Naive thymus-derived CD4-positive, alpha-beta T cell (primary cell): ENCODE measurements at regions of chr1 and their contacts with region 1.

Region 1: GRCh38 chr1:206575165-206575893 is 36.9 kb downstream of the EIF2D start:
- DNase-seq: peak in 7 of 9 donors; percentile 73 to 86 (median 82)
- ATAC-seq: peak; percentile 75
- H3K4me3 ChIP-seq: peak overlapping the region; percentile 33
- H3K4me3 Mint-ChIP-seq: peak overlapping the region; percentile 68 to 88 (median 79)
- H3K27ac ChIP-seq: peak overlapping the region; percentile 90
- H3K27ac Mint-ChIP-seq: peak overlapping the region; percentile 81 to 100 (median 91)
- H3K4me1 ChIP-seq: peaks cover 98% of the 10 kb centered on the region in 2 donors
- H3K4me1 Mint-ChIP-seq: peaks cover 79 to 100% (median 96%) of the 10 kb centered on the region in 7 donors
- H3K27me3 ChIP-seq: no peaks in the 10 kb centered on the region
- H3K27me3 Mint-ChIP-seq: no peaks in the 10 kb centered on the region

Region 2: GRCh38 chr1:206556750-206557635 is 18.3 kb before region 1 on chr1:
- CTCF ChIA-PET with region 1: interaction called, 424 read pairs
- POLR2A ChIA-PET with region 1: interaction called, 722 read pairs
- intact Hi-C with region 1: loop called (anchors 1 kb)
- DNase-seq: peak; percentile 78 to 93 (median 88)
- ATAC-seq: peak; percentile 86
- H3K4me3 ChIP-seq: peak overlapping the region; percentile 90
- H3K4me3 Mint-ChIP-seq: peak overlapping the region; percentile 77 to 99 (median 96)
- H3K27ac ChIP-seq: peak overlapping the region; percentile 90
- H3K27ac Mint-ChIP-seq: peak overlapping the region; percentile 86 to 100 (median 94)
- H3K4me1 ChIP-seq: peaks cover 61 to 66% of the 10 kb centered on the region in 2 donors
- H3K4me1 Mint-ChIP-seq: peaks cover 59 to 75% (median 70%) of the 10 kb centered on the region in 7 donors
- H3K27me3 ChIP-seq: no peaks in the 10 kb centered on the region
- H3K27me3 Mint-ChIP-seq: no peaks in the 10 kb centered on the region

Region 3: GRCh38 chr1:206563367-206564207 is 11.7 kb before region 1 on chr1:
- CTCF ChIA-PET with region 1: interaction called, 424 read pairs
- POLR2A ChIA-PET with region 1: interaction called, 722 read pairs
- intact Hi-C with region 1: loop called (anchors 1 kb)
- DNase-seq: no peak
- ATAC-seq: peak; percentile 6
- H3K4me3 ChIP-seq: peak overlapping the region; percentile 44
- H3K4me3 Mint-ChIP-seq: peak overlapping the region; percentile 77 to 99 (median 87)
- H3K27ac ChIP-seq: peak overlapping the region; percentile 90
- H3K27ac Mint-ChIP-seq: peak overlapping the region; percentile 86 to 100 (median 92)
- H3K4me1 ChIP-seq: peaks cover 88 to 90% of the 10 kb centered on the region in 2 donors
- H3K4me1 Mint-ChIP-seq: peaks cover 75 to 96% (median 91%) of the 10 kb centered on the region in 7 donors
- H3K27me3 ChIP-seq: no peaks in the 10 kb centered on the region
- H3K27me3 Mint-ChIP-seq: no peaks in the 10 kb centered on the region

Region 4: GRCh38 chr1:206590025-206590758 is 14.9 kb after region 1 on chr1:
- CTCF ChIA-PET with region 1: interaction called, 9 read pairs
- POLR2A ChIA-PET with region 1: interaction called, 8 read pairs
- intact Hi-C with region 1: loop called in 1 of 2 experiments (anchors 1 kb)
- DNase-seq: peak in 3 of 9 donors; percentile 31 to 60 (median 36)
- ATAC-seq: peak; percentile 84
- H3K4me3 ChIP-seq: no peak overlapping the region
- H3K4me3 Mint-ChIP-seq: peak overlapping the region in 2 of 10 donors; percentile 70 to 75
- H3K27ac ChIP-seq: peak overlapping the region; percentile 28
- H3K27ac Mint-ChIP-seq: peak overlapping the region; percentile 27 to 91 (median 80)
- H3K4me1 ChIP-seq: peaks cover 7 to 19% of the 10 kb centered on the region in 2 donors
- H3K4me1 Mint-ChIP-seq: peaks cover 21 to 70% (median 45%) of the 10 kb centered on the region in 7 donors
- H3K27me3 ChIP-seq: no peaks in the 10 kb centered on the region
- H3K27me3 Mint-ChIP-seq: no peaks in the 10 kb centered on the region

Region 5: GRCh38 chr1:206967096-206967849 is 391.9 kb after region 1 on chr1:
- CTCF ChIA-PET with region 1: no interaction called
- POLR2A ChIA-PET with region 1: no interaction called
- intact Hi-C with region 1: no loop called
- DNase-seq: peak in 2 of 9 donors; percentile 6 to 16
- ATAC-seq: peak; percentile 67
- H3K4me3 ChIP-seq: no peak overlapping the region
- H3K4me3 Mint-ChIP-seq: peak overlapping the region; percentile 54 to 82 (median 72)
- H3K27ac ChIP-seq: no peak overlapping the region
- H3K27ac Mint-ChIP-seq: peak overlapping the region; percentile 46 to 90 (median 71)
- H3K4me1 ChIP-seq: peaks cover 1 to 25% of the 10 kb centered on the region in 2 donors
- H3K4me1 Mint-ChIP-seq: peaks cover 29 to 57% (median 38%) of the 10 kb centered on the region in 7 donors
- H3K27me3 ChIP-seq: no peaks in the 10 kb centered on the region
- H3K27me3 Mint-ChIP-seq: peaks cover 0 to 31% (median 0%) of the 10 kb centered on the region in 5 donors